RWPE1 (cell line): ENCODE measurements at regions of chr3 and their contacts with region 1.

Region 1: DNA sequence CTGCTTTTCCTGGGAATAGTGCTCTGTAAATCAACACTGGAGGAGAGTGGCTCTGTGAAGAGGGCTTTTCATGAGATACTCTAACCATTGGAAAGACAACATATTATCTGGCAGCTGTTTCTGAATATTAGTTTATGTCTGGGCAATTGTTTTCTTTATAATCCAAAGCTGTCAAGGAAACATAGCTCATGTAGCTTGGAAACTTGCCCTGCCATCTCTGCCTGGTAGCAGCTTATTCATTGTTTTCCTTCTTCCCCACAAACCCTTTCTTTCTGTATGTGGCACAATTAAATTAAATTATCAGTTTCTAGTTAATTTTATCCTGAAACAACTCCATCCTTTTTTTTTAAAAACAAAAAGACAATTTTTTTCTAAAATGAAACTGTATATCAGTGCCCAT is 160.0 kb downstream of the EDEM1 start:
- DNase-seq: no peak
- H3K27ac ChIP-seq: no peak overlapping the region
- CTCF ChIP-seq: no peak

Region 2: DNA sequence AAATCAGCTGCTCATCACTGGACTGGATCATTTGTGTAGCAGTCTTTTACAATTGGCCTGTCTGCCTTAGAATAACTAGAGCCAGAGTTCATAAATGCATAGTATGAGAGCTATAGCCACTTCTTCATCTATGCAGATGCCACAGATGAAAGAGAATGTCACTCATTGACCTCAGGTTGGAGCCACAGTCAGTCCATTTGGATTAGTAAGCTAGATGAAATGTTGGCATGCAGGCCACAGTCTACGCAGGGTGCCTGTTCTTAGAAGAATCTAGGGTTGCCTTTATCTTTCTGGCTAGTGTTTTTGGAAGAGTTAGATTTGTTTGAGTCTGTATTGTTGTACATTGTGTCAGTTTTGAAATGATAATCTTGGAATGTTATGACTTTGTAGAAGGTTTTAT is 185.4 kb before region 1 on chr3:
- CTCF ChIA-PET with region 1: no interaction called
- POLR2A ChIA-PET with region 1: interaction called, 14 read pairs
- DNase-seq: no peak
- H3K27ac ChIP-seq: no peak overlapping the region
- CTCF ChIP-seq: no peak

Region 3: DNA sequence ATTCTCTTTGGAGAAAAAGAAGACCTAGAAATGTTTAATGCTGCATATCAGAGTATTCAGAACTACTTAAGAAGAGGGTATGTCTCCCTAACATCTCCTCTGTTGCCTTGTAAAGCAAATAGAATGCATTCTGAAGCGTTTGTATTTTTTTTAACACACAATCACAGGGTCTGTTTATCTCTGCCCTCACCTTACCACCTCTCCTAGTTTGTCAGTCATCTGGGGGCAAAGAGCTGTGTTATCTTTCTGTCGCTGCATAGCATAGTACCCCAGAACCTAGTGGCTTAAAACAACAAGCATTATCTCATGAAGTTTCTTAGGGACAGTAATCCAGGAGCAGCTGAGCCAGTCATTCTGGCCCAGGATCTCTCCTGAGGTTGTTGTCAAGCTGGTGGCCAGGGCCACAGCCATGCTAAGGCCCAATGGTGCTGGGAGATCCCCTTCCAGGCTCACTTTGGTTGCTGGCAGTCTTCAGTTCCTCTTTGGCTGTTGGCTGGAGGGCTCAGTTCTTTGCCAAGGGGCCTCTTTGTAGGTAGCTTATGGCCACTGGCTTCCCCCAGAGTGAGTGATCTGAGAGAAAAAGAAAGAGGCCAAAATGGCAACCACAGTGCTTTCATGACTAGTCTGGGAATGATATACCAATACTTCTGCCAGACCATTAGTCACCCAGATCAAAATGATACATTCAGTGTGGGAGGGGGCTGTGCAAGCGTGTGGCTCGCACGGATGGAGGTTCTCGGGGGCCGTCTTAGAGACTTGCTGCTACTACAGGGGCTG is 142.1 kb before region 1 on chr3:
- CTCF ChIA-PET with region 1: no interaction called
- POLR2A ChIA-PET with region 1: no interaction called
- DNase-seq: no peak
- H3K27ac ChIP-seq: no peak overlapping the region
- CTCF ChIP-seq: no peak

Region 4: DNA sequence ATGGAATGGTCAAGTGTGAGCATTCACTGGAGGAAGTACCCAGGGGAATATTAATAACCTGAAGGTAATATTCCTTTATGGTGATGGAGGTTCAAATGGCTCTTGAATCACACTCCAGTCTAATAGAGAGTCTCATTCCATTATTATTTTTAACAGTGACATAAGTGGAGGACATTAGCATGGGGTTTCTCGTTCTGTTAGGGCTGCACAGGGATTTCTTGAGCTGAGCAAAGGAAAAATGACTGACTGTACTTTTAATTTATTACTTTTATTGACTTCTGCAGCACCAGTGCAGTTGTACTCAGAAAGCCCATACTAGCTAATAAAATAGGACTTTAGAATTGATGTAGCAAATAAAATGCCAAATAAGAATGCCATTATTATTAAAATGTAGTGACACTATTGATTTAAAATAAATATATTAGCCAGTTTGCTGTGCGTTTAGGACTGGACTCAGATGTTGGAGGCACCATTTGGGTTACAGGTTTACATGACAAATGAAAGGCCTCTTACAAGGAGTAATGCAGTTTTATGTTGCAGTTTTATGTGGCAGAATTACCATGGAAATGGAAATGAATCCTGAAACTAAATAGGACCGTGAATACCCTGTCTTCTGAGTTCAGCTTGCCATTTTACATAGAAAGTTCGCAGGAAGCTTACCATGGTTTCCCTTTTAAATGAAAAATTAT is 808.3 kb after region 1 on chr3:
- CTCF ChIA-PET with region 1: no interaction called
- POLR2A ChIA-PET with region 1: no interaction called
- DNase-seq: no peak
- H3K27ac ChIP-seq: no peak overlapping the region
- CTCF ChIP-seq: no peak